HCT116 (cell line): ENCODE measurements at regions of chr13 and their contacts with region 1.

Region 1: DNA sequence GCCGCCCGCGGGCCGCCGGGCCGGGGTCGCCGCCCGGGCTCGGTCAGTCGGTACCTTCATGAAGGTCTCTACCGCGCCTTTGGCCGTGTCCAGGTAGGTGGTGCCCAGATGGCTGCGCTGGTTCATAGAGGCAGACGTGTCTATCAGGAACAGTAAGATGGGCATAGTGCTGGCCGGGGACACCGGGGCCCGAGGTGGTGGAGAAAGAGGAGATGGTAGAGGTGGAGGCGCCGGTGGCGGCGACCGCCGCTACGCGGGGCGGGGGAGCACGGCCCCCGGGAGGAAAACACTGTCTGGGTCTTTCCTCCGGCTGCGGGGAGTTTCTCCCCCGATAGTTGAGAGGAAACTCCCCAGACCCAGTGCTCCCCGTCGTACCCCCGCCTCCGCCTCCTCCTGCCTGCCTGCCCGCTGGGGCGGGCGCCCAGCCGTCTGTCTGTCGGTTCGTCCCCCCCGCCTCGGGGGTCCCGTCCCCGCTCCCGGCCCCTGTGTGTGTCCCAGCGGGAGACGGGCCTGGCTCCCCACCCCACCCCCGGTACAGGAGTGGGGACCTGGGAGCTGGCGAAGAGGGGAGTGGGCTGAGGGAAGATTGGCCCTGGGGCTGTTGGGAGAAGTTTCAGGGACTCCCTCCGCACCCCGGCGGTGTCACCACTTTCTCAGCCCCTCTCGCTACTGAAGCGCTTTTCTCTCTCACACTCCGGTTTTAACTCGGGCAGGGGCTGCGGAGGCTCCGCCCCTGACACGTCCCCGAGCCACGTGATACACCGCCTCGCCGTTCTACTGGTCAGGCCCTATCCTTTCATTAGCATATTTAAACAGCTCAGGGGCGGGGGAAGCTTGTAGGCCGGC is at the start of gene INTS6:
- DNase-seq: peak; percentile 98
- ATAC-seq: peak; percentile 88
- H3K4me3 ChIP-seq: peak within 1 kb of the TSS; percentile 86
- H3K27ac ChIP-seq: peak within 1 kb of the TSS; percentile 95
- H3K4me1 ChIP-seq: peaks cover 6 to 15% of the 10 kb centered on the region in 2 experiments; a peak in 3 of 4 replicates
- H3K27me3 ChIP-seq: no peaks in the 10 kb centered on the region
- CTCF ChIP-seq: no peak
- POLR2A ChIP-seq: peak; percentile 97
- RAD21 ChIP-seq: no peak
- total RNA-seq, gene INTS6: 44.7 TPM

Region 2: GRCh38 chr13:51006067-51006845 is 446.3 kb before region 1 on chr13:
- CTCF ChIA-PET with region 1: no interaction called
- POLR2A ChIA-PET with region 1: no interaction called
- RAD21 ChIA-PET with region 1: no interaction called
- intact Hi-C with region 1: no loop called
- DNase-seq: no peak
- ATAC-seq: no peak
- H3K4me3 ChIP-seq: no peak overlapping the region
- H3K27ac ChIP-seq: no peak overlapping the region
- H3K4me1 ChIP-seq: no peaks in the 10 kb centered on the region
- H3K27me3 ChIP-seq: no peaks in the 10 kb centered on the region
- CTCF ChIP-seq: no peak
- POLR2A ChIP-seq: no peak
- RAD21 ChIP-seq: no peak

Region 3: DNA sequence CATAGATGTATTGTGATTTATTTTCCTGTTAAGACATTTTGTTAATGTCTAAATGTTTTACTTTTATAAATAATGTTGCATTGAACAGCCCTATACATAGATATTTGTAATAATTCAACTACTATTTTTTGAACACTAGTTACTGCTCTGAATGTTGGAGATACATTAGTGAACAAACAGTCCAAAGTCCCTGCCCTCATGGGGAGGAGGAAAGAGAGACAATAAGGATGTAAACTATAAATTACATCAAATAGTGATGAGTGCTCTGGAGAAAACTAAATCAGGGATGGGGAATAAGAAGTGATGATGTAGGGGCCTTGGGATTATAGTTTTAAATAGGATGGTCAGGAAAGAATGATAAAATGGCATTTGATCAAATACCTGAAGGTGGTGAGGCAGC is 12.5 kb after region 1 on chr13:
- CTCF ChIA-PET with region 1: interaction called, 4 read pairs
- POLR2A ChIA-PET with region 1: interaction called, 11 read pairs
- RAD21 ChIA-PET with region 1: no interaction called
- intact Hi-C with region 1: no loop called
- DNase-seq: no peak
- ATAC-seq: no peak
- H3K4me3 ChIP-seq: no peak overlapping the region
- H3K27ac ChIP-seq: no peak overlapping the region
- H3K4me1 ChIP-seq: no peaks in the 10 kb centered on the region
- H3K27me3 ChIP-seq: no peaks in the 10 kb centered on the region
- CTCF ChIP-seq: no peak
- POLR2A ChIP-seq: no peak
- RAD21 ChIP-seq: no peak

Region 4: GRCh38 chr13:51475727-51476501 is 23.3 kb after region 1 on chr13:
- CTCF ChIA-PET with region 1: no interaction called
- POLR2A ChIA-PET with region 1: interaction called, 23 read pairs
- RAD21 ChIA-PET with region 1: no interaction called
- intact Hi-C with region 1: no loop called
- DNase-seq: no peak
- ATAC-seq: no peak
- H3K4me3 ChIP-seq: no peak overlapping the region
- H3K27ac ChIP-seq: no peak overlapping the region
- H3K4me1 ChIP-seq: peaks cover 0 to 15% of the 10 kb centered on the region in 2 experiments; a peak in 2 of 4 replicates
- H3K27me3 ChIP-seq: no peaks in the 10 kb centered on the region
- CTCF ChIP-seq: no peak
- POLR2A ChIP-seq: no peak
- RAD21 ChIP-seq: no peak

Region 5: DNA sequence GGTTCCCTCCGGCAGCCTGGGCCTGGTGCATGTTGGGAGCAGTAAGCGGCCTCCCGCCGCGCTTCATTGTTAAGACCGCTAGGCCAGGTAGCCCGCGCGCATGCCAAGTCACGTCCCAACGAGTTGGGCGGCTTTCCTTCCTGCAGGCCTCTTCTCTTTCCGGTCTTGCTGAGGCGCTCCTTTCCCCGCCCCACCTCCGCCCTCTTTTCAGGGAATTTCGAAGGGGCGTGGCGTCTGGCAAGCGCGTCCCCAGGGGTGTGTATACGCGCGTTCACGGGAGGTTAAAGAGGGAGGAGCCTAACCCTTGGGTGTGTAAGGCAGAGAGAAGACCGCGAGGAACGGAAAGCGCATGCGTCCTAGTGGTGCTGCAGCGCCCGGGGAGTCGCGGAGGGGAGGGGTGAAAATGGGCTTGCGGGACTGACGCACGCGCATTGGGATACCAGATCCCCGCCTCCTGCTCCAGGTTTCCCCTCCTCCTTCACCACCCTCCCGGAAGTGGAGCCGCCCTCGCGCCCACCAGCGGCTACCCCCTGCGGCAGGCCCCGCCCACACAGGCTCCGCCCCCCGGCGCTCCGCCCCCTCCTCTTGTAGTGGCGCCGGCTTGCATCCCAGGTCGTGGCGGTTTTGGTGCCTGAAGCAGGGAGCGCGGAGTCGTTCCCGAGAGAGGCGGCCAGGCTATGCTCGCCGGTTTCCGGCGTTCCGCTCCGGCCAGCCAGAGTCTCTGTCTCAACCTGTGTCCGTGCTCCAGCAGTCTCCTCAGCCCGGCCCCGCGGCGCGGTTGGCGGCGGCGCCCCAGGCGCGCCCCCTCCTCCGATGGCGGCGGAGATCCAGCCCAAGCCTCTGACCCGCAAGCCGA is 131.5 kb after region 1 on chr13 and contains the start of gene WDFY2:
- CTCF ChIA-PET with region 1: interaction called, 3 read pairs
- POLR2A ChIA-PET with region 1: interaction called, 12 read pairs
- RAD21 ChIA-PET with region 1: no interaction called
- intact Hi-C with region 1: loop called (anchors 1 kb)
- DNase-seq: peak; percentile 99
- ATAC-seq: peak; percentile 84
- H3K4me3 ChIP-seq: peak within 1 kb of the TSS; percentile 75 to 89
- H3K27ac ChIP-seq: peak within 1 kb of the TSS; percentile 83
- H3K4me1 ChIP-seq: peaks cover 14 to 18% of the 10 kb centered on the region in 2 experiments
- H3K27me3 ChIP-seq: no peaks in the 10 kb centered on the region
- CTCF ChIP-seq: no peak
- POLR2A ChIP-seq: peak; percentile 71
- RAD21 ChIP-seq: no peak
- total RNA-seq, gene WDFY2: 6.1 TPM

Region 6: GRCh38 chr13:51781246-51782022 is 328.9 kb after region 1 on chr13:
- CTCF ChIA-PET with region 1: no interaction called
- POLR2A ChIA-PET with region 1: interaction called, 4 read pairs
- RAD21 ChIA-PET with region 1: no interaction called
- intact Hi-C with region 1: loop called (anchors 5 kb)
- DNase-seq: peak; percentile 18
- ATAC-seq: peak; percentile 96
- H3K4me3 ChIP-seq: no peak overlapping the region
- H3K27ac ChIP-seq: no peak overlapping the region
- H3K4me1 ChIP-seq: no peaks in the 10 kb centered on the region
- H3K27me3 ChIP-seq: no peaks in the 10 kb centered on the region
- CTCF ChIP-seq: peak; percentile 47 to 61 (median 57); a peak in 5 of 6 replicates
- POLR2A ChIP-seq: no peak
- RAD21 ChIP-seq: peak; percentile 77

Region 7: DNA sequence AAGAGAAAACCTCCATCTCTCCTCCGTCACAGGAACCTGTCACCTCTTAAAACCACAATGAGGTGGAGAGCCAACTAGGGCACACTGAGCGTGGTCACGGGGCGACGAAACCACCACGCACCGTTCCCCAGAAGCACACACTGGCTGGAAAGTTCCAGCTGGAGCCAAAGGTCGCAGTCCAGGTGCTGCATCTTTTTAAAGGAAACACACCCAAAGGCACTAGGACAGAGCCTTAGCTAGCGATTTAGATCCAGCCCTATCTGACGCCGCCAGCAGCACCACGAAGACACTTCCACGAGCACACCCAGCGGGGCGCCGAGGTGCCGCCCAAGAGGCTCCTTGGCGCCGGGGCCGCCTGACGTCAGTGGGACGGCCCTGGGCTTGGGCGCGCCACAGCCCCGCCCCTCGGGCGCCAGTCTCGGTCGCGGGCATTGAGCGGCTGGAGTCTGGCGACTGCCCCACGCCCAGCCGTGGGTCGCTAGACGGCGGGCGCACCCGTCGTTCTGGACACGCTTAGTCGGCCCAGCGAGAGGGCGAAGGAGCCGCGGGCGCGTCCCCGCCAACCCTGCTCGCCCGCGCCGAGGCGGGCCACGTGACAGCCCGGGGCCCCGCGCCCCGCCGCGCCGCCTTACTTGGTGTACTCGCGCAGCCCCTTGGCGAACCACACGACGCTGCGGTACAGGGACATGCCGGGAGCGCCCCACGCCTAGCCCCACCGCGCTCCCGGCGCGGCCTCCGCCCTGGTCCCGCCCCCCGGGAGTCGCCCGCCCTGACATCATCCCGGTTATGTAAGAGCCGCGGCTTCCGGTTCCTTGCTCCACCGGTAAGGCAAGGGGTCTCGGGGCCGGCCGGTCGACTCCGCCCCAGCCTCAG is 351.1 kb after region 1 on chr13 and contains the start of gene DHRS12:
- CTCF ChIA-PET with region 1: no interaction called
- POLR2A ChIA-PET with region 1: interaction called, 9 read pairs
- RAD21 ChIA-PET with region 1: interaction called in 1 of 2 experiments, 3 read pairs
- intact Hi-C with region 1: loop called (anchors 2 kb)
- DNase-seq: peak; percentile 43
- ATAC-seq: peak; percentile 87
- H3K4me3 ChIP-seq: peak within 1 kb of the TSS; percentile 74 to 78
- H3K27ac ChIP-seq: peak within 1 kb of the TSS; percentile 98
- H3K4me1 ChIP-seq: peaks cover 22 to 34% of the 10 kb centered on the region in 2 experiments
- H3K27me3 ChIP-seq: no peaks in the 10 kb centered on the region
- CTCF ChIP-seq: no peak
- POLR2A ChIP-seq: peak; percentile 59
- RAD21 ChIP-seq: no peak
- total RNA-seq, gene DHRS12: 3.9 TPM